ENCODE measurements at regions of chr2 and their contacts with region 1.

Region 1: GRCh38 chr2:119264781-119265692 is 41.4 kb downstream of the STEAP3 start:
- DNase-seq: peak in 6 of 7 donors; percentile 42 to 86 (median 62)
- H3K4me3 ChIP-seq: no peak overlapping the region
- H3K27ac ChIP-seq: no peak overlapping the region
- H3K4me1 ChIP-seq: no peaks in the 10 kb centered on the region
- H3K27me3 ChIP-seq: no peaks in the 10 kb centered on the region
- CTCF ChIP-seq: peak; percentile 60 to 82 (median 74)
- POLR2A ChIP-seq: no peak

Region 2: GRCh38 chr2:119028327-119029174 is 236.5 kb before region 1 on chr2:
- intact Hi-C with region 1: loop called in 1 of 2 experiments (anchors 10 kb)
- DNase-seq: peak in 4 of 7 donors; percentile 40 to 63 (median 50)
- H3K4me3 ChIP-seq: no peak overlapping the region
- H3K27ac ChIP-seq: no peak overlapping the region
- H3K4me1 ChIP-seq: no peaks in the 10 kb centered on the region
- H3K27me3 ChIP-seq: peaks cover 7% of the 10 kb centered on the region
- CTCF ChIP-seq: peak in 5 of 6 experiments; percentile 13 to 37 (median 28)
- POLR2A ChIP-seq: no peak

Region 3: DNA sequence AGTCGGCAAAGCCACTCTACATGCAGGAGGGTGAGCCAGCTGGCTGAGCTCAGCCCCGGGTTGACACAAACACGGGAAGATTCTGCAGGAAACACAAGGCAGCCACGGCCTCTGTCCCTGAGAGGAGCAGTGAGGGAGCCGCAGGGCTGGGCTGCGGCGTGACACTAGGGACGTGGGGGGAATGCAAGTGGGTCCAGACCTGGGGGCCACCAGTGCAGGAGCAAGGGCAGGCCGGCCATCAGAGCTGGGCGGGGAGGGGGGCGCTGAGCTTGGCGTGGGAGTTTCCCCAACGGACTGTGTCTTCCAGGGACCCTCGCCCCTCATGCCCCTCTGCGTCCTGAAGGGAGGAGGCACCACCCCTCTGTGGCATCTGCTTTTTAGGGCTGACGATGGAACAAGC is 94.5 kb before region 1 on chr2:
- intact Hi-C with region 1: no loop called
- DNase-seq: no peak
- H3K4me3 ChIP-seq: no peak overlapping the region
- H3K27ac ChIP-seq: no peak overlapping the region
- H3K4me1 ChIP-seq: no peaks in the 10 kb centered on the region
- H3K27me3 ChIP-seq: peaks cover 2% of the 10 kb centered on the region
- CTCF ChIP-seq: no peak
- POLR2A ChIP-seq: no peak

Region 4: DNA sequence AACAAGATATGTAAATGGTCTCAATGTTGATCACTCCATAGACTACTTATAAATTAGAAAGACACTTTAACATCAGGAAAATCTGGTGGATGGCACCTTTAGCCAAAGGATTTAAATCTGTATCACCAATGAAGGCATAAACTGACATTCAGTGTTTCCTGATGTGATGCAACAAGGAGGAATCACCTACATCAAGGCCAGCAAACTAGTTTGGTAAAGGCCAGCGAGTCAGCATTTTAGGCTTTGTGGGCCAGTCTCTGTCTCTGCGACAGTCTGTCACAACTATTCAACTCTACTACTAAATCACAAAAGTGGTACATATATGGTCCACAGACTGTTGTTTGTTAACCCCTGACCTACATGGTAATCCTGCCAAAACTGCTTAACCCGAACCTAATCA is 68.3 kb after region 1 on chr2:
- intact Hi-C with region 1: no loop called
- DNase-seq: peak in 3 of 7 donors; percentile 35 to 41 (median 36)
- H3K4me3 ChIP-seq: no peak overlapping the region
- H3K27ac ChIP-seq: no peak overlapping the region
- H3K4me1 ChIP-seq: peaks cover 0 to 3% of the 10 kb centered on the region in 2 donors
- H3K27me3 ChIP-seq: no peaks in the 10 kb centered on the region
- CTCF ChIP-seq: no peak
- POLR2A ChIP-seq: no peak

Measured in adrenal gland (tissue), 19 donors.